IMR-90 (cell line): ENCODE measurements at regions of chr2 and their contacts with region 1.

Region 1: GRCh38 chr2:203594571-203594970 is 59.5 kb upstream of the RAPH1 start:
- DNase-seq: peak; percentile 68
- ATAC-seq: peak; percentile 87
- H3K4me3 ChIP-seq: no peak overlapping the region
- H3K27ac ChIP-seq: no peak overlapping the region
- H3K4me1 ChIP-seq: peaks cover 9% of the 10 kb centered on the region
- H3K27me3 ChIP-seq: no peaks in the 10 kb centered on the region
- CTCF ChIP-seq: no peak
- POLR2A ChIP-seq: no peak
- RAD21 ChIP-seq: no peak

Region 2: DNA sequence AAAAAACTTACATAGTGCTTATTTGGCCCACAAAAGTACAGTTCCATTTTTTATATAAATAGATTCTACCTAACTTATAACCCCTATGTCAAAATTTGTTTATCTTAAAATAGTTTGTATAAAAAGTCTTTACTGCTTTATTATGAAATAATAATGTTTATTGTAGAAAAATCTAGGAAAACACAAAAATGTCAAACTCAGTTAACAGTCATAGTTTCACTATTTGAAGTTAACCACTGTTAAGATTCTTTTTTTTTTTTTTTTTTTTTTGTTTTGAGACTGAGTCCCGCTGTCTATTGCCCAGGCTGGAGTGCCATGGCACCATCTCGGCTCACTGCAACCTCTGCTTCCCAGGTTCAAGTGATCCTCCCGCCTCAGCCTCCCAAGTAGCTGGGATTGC is 292.9 kb before region 1 on chr2:
- CTCF ChIA-PET with region 1: no interaction called
- POLR2A ChIA-PET with region 1: interaction called, 12 read pairs
- dilution Hi-C with region 1: no loop called
- in situ Hi-C with region 1: no loop called
- intact Hi-C with region 1: no loop called
- DNase-seq: peak; percentile 51
- ATAC-seq: peak; percentile 74
- H3K4me3 ChIP-seq: no peak overlapping the region
- H3K27ac ChIP-seq: no peak overlapping the region; the same call in 1 of the 2 replicates
- H3K4me1 ChIP-seq: peaks cover 9% of the 10 kb centered on the region
- H3K27me3 ChIP-seq: no peaks in the 10 kb centered on the region
- CTCF ChIP-seq: no peak
- POLR2A ChIP-seq: no peak
- RAD21 ChIP-seq: no peak